Activated T-helper 1 cell treated with anti-CD3 and anti-CD28 coated beads, Interleukin-12 subunit alpha, Interleukin-12 subunit beta, Interleukin-2, Interleukin-4 antibody, amounts not matched to agents 30 ng/mL and 10 ng/mL and 1 ng/mL, durations not matched to agents 14 hours and 24 hours and 36 hours (primary cell): ENCODE measurements at regions of chr15 and their contacts with region 1.

Region 1: DNA sequence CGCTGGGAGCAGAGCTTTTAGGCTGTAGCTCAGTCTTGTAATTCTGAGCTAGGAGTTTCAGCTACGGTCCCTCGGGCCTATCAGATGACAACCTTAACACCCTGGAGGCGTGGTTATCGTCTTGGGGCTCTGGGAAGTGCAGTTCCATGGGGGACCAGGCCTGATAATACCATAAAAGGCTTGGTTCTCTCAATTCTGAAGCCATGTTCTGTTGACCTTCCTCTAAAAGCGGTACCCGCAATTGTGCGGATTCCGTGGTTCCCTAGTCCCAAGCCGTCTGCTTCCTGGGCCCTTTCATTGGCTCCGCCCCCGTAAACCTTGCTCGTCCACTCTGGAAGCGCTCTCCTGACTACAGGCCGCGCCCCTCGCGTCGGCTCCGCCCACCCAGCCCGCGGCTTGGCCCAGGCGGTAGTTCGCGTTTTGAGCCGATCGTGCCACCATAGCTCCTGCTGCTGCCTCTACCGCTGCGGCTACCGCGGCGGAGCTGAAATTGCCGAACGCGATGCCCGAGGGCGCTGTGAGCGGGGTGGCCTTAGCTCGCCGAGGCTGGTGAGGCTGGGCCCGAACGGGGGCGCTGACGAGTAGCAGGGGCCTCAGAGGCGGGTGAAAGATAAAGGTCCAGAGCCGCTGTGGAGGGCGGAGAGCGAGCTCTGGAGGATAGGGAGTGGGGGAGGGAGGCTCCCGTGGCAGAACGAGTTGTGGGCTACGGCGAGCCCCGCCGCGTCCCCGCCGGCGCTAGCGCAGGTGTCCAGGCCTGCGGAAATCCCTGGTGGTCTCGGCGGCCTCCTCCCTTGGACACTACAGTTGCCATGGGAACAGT is at the start of gene MAPKBP1:
- DNase-seq: peak; percentile 98
- H3K4me3 Mint-ChIP-seq: peak within 1 kb of the TSS; percentile 93
- H3K27ac Mint-ChIP-seq: peak within 1 kb of the TSS; percentile 92
- H3K4me1 Mint-ChIP-seq: peaks cover 59% of the 10 kb centered on the region
- H3K27me3 Mint-ChIP-seq: no peaks in the 10 kb centered on the region
- total RNA-seq, gene MAPKBP1: 26.3 and 28.2 TPM in 2 replicates

Region 2: DNA sequence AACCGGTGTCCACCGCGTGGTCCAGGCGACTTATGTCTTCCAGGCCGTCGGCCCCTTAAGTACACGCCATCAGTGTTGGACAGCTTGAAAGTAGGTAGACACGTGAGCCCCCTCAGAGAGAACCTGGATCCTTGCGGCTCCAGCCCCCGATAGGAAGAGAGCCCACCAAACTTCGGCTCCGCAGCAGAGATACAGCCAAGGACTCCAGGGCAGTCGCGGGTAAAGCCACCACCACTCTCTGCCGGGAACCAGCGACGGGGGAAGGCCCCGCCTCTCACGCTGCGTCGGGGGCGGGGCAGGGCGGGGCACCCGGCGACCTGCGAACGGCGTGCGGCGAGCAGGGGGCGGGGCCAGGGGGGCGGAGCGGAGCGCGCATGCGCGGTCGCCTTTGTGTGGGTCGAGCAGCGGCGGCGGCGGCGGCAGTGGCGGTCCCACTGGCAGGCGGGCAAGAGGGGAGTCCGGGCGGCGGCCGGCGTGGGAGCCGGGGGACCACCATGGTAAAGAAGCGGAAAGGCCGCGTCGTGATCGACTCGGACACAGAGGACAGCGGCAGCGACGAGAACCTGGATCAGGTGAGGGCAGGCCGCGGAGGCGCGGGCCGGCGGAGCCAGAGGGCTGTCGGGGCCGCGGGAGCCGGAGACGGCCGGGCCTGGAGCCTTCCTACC is 357.4 kb before region 1 on chr15 and contains the start of gene RTF1:
- intact Hi-C with region 1: loop called (anchors 5 kb)
- DNase-seq: peak; percentile 98
- H3K4me3 Mint-ChIP-seq: peak within 1 kb of the TSS; percentile 93
- H3K27ac Mint-ChIP-seq: peak within 1 kb of the TSS; percentile 96
- H3K4me1 Mint-ChIP-seq: peaks cover 40% of the 10 kb centered on the region
- H3K27me3 Mint-ChIP-seq: no peaks in the 10 kb centered on the region
- total RNA-seq, gene RTF1: 41.0 and 44.7 TPM in 2 replicates

Region 3: DNA sequence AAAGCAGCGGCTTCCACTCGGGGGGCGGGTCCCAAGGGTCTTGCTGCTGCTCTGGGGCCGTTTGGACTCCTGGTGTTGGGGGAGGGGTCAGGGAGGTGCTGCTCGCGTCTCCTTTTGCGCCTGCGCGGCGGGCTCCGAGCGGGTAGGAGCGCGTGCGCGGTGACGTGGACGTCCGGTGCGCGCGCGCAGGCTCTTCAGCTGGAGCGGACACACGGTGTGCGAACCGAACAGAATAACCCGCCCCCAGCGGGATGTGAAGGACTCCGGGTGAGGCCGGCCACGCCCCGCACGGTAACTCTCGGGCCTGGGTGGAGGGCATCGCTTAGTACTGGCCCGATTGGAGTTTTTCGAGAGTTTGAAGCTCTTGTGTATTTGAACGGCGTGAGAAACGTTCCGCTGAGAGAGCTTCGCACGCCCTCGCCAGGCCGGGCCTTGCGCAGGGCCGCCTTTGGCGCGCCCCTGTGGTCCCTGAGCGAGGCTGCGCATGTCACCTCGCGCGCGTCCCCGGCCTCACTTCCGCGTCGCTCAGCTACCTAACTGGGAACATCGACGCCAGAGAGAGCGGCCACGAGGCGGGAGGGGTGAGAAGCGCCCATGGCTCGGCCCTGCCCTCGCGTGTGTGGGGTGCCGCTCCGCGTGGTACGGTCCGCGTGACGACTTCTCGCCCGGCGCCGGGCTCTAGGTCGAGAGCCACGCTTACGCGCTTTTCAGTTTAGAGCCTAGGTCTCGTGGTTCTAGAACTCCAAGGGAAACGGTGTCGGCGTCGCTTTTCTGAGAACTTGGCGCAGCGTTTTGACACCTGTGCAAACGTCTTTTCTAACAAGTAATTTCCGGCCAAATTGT is 113.8 kb before region 1 on chr15 and contains the start of gene MGA:
- intact Hi-C with region 1: loop called (anchors 2 kb)
- DNase-seq: peak; percentile 88
- H3K4me3 Mint-ChIP-seq: peak within 1 kb of the TSS; percentile 90
- H3K27ac Mint-ChIP-seq: peak within 1 kb of the TSS; percentile 91
- H3K4me1 Mint-ChIP-seq: peaks cover 37% of the 10 kb centered on the region
- H3K27me3 Mint-ChIP-seq: peaks cover 28% of the 10 kb centered on the region
- total RNA-seq, gene MGA: 37.5 and 38.8 TPM in 2 replicates

Region 4: GRCh38 chr15:41827880-41828806 is 53.9 kb after region 1 on chr15 and contains the start of gene JMJD7:
- intact Hi-C with region 1: loop called (anchors 1 kb)
- DNase-seq: peak; percentile 88
- H3K4me3 Mint-ChIP-seq: peak within 1 kb of the TSS; percentile 86
- H3K27ac Mint-ChIP-seq: peak within 1 kb of the TSS; percentile 72
- H3K4me1 Mint-ChIP-seq: peaks cover 34% of the 10 kb centered on the region
- H3K27me3 Mint-ChIP-seq: no peaks in the 10 kb centered on the region
- total RNA-seq, gene JMJD7: 14.2 and 17.8 TPM in 2 replicates

Region 5: GRCh38 chr15:41849861-41850260 is 75.6 kb after region 1 on chr15:
- intact Hi-C with region 1: no loop called
- DNase-seq: no peak
- H3K4me3 Mint-ChIP-seq: no peak overlapping the region
- H3K27ac Mint-ChIP-seq: no peak overlapping the region
- H3K4me1 Mint-ChIP-seq: peaks cover 7% of the 10 kb centered on the region
- H3K27me3 Mint-ChIP-seq: peaks cover 3% of the 10 kb centered on the region

Region 6: GRCh38 chr15:41972253-41973242 is 198.3 kb after region 1 on chr15 and contains the start of gene EHD4:
- intact Hi-C with region 1: loop called (anchors 2 kb)
- DNase-seq: peak; percentile 95
- H3K4me3 Mint-ChIP-seq: peak within 1 kb of the TSS; percentile 91
- H3K27ac Mint-ChIP-seq: peak within 1 kb of the TSS; percentile 91
- H3K4me1 Mint-ChIP-seq: peaks cover 60% of the 10 kb centered on the region
- H3K27me3 Mint-ChIP-seq: peaks cover 7% of the 10 kb centered on the region
- total RNA-seq, gene EHD4: 29.5 and 30.1 TPM in 2 replicates